ENCODE measurements at regions of chr2 and their contacts with region 1.

Region 1: GRCh38 chr2:106104332-106105062 is 89.6 kb downstream of the UXS1 start:
- DNase-seq: peak in 6 of 10 donors; percentile 49 to 91 (median 54)

Region 2: GRCh38 chr2:105627534-105627933 is 477.0 kb before region 1 on chr2:
- intact Hi-C with region 1: no loop called
- DNase-seq: peak in 8 of 10 donors; percentile 35 to 91 (median 42)

Region 3: GRCh38 chr2:106542811-106543259 is 438.3 kb after region 1 on chr2:
- intact Hi-C with region 1: loop called (anchors 5 kb)
- DNase-seq: peak; percentile 43 to 94 (median 68)

Region 4: GRCh38 chr2:106582148-106583143 is 477.9 kb after region 1 on chr2:
- intact Hi-C with region 1: loop called (anchors 5 kb)
- DNase-seq: peak; percentile 62 to 96 (median 79)

Measured in posterior cingulate gyrus (tissue), 11 donors.